ENCODE measurements at regions of chr2 and their contacts with region 1.

Region 1: DNA sequence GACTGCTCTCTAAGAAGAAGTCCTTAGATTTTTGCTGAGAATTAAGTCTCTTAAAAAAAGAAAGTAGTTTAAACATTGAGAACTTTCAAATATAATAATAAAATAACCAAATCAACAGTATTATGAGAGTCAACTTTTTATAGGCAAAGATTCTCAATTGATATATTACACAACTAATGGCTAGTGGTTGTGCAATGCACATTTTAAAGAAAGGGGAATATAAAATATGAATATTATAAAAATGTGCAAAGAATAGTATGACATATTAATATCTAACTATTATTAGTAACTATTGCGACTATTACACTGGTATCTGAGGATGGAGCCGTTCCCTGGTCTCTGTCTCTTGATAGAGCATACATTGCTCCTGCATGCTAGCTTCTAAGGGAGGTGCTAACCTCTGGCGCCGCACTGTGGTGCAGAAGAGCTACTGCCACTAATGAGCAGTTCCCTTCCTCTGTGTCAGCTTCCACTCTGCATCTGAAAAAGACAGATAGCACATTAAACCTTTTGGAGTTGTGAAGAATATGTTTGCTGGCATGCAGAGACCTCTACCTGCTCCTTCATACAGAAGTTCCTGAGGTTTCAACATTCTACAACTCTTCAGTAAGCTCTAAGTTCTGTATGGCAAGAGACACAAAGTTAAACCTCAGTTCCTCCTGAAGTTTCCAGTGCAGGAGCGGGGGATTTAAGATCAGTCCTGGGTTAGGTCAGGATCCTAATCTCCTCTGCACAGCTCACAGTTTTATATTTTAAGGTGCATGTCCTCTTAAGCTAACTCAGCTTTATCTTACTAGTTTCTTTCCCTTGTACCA is 3.5 kb upstream of the SLC9A2 start:
- DNase-seq: peak; percentile 33
- H3K4me3 ChIP-seq: no peak overlapping the region
- H3K27ac ChIP-seq: no peak overlapping the region
- H3K27me3 ChIP-seq: peaks cover 41% of the 10 kb centered on the region
- CTCF ChIP-seq: peak; percentile 100

Region 2: DNA sequence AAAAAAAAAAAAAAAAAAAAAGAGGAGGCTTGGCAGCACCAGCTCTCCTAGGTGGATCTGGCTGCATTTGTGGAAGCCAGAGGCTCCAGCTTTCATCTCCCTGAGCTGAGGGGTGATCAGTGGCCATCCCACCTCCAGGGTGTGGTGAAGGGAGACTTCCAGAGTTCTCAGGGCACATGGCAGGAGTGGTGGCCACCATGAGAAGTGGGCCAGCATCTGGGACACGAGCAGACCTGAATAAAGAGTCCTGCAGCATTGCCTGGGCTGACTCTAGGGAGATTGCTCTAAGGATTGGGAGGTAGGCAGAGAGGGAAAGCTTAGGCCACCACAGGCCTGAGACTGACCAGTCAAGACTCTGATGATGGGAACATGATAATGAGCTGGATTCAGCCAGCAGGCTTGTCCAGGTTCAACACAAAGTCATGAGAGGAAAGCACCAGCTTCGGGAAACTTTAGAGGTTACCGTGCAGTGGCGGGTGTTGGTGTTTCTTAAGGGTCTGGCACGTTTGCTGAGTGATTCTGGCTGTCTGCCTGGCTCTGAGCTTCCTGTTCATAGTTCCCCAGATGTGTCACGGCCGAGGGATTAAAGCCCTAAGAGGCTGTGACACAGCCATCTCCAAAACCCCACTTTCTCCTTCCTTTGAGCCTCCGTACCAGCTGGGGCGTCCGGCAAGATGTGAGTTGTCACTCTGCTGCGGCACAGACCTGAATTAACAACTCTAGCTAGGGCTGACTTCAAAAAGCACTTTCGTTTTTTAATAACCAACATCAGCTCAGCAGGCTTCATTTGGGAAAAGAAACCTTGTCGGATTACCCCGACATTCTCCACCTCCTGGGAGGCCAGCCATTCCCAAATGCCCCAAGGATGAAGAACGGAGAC is 511.6 kb before region 1 on chr2:
- CTCF ChIA-PET with region 1: no interaction called
- POLR2A ChIA-PET with region 1: no interaction called
- DNase-seq: no peak
- H3K4me3 ChIP-seq: peak overlapping the region; percentile 56
- H3K27ac ChIP-seq: peak overlapping the region; percentile 83
- H3K27me3 ChIP-seq: no peaks in the 10 kb centered on the region
- CTCF ChIP-seq: no peak

Region 3: DNA sequence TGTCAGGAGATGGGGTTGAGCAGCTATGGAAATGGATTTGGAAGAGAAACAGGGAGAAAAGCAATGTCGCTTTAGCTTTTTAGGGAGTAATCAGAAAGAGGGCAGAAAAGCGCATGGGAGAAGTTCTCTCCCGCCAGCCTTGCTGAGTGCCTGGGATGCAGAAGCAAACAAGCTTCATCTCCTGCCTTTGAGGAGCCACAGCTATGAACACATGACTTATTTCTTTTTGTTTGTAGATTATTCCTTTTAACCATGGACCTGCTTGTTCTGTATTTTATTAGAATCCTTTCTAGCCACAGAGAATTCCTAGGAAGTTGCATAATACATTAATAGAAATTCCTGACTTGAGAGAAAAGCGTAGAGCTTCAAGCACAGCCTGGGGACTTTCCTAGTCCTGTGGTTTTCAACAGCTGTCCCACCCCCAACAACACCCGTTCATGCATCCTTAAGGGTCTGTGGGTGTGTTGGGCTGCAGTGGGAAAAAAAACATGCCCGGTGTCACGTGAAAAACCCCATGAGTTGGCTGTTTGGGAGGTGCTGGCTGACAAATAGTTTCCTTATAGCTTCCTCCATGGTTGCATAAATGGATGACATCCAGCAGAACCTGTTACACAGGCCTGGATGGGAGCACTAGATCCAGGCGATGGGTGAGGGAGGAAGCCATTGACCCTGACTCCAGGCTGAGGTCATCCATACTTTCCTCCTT is 127.9 kb before region 1 on chr2:
- CTCF ChIA-PET with region 1: interaction called, 16 read pairs
- POLR2A ChIA-PET with region 1: no interaction called
- DNase-seq: peak; percentile 34
- H3K4me3 ChIP-seq: no peak overlapping the region
- H3K27ac ChIP-seq: peak overlapping the region; percentile 39
- H3K27me3 ChIP-seq: peaks cover 18% of the 10 kb centered on the region
- CTCF ChIP-seq: no peak

Region 4: GRCh38 chr2:102632380-102633175 is 16.7 kb after region 1 on chr2:
- CTCF ChIA-PET with region 1: interaction called, 17 read pairs
- POLR2A ChIA-PET with region 1: no interaction called
- DNase-seq: no peak
- H3K4me3 ChIP-seq: no peak overlapping the region
- H3K27ac ChIP-seq: no peak overlapping the region
- H3K27me3 ChIP-seq: no peaks in the 10 kb centered on the region
- CTCF ChIP-seq: no peak

Region 5: GRCh38 chr2:102690012-102690411 is 74.2 kb after region 1 on chr2:
- CTCF ChIA-PET with region 1: no interaction called
- POLR2A ChIA-PET with region 1: no interaction called
- DNase-seq: no peak
- H3K4me3 ChIP-seq: no peak overlapping the region
- H3K27ac ChIP-seq: no peak overlapping the region
- H3K27me3 ChIP-seq: peaks cover 4% of the 10 kb centered on the region
- CTCF ChIP-seq: no peak

Measured in AG04450 (cell line).